ENCODE measurements at regions of chrX and their contacts with region 1.

Region 1: DNA sequence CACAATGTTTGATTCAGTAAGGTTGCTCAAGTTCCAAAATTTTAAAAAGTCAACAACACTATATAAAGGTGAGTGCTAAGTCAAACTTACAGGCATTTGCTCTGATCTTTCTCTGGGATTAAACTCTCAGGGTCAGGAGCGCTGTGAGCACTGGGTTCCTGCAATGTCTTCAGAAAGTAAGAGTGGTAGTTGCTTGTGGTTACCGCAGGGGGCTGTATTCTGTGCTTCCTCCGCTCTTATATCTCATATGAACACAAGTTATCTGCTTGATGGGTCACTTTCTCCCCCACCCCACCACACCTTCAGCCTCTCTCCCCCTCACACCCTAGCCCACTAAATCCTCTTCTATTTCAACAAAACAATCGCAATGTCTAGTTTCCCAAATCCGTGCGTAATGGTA is 116.4 kb upstream of the IGSF1 start:
- DNase-seq: no peak
- ATAC-seq: no peak
- H3K4me3 ChIP-seq: no peak overlapping the region
- H3K27ac ChIP-seq: no peak overlapping the region
- H3K4me1 ChIP-seq: no peaks in the 10 kb centered on the region
- H3K27me3 ChIP-seq: peaks cover 0 to 23% (median 0%) of the 10 kb centered on the region in 7 donors
- CTCF ChIP-seq: no peak

Region 2: GRCh38 chrX:131356725-131357124 is 48.8 kb before region 1 on chrX:
- intact Hi-C with region 1: loop called in 1 of 10 experiments (anchors 1 kb)
- DNase-seq: no peak
- ATAC-seq: no peak
- H3K4me3 ChIP-seq: no peak overlapping the region
- H3K27ac ChIP-seq: no peak overlapping the region
- H3K4me1 ChIP-seq: no peaks in the 10 kb centered on the region
- H3K27me3 ChIP-seq: peaks cover 0 to 18% (median 0%) of the 10 kb centered on the region in 7 donors
- CTCF ChIP-seq: no peak

Region 3: DNA sequence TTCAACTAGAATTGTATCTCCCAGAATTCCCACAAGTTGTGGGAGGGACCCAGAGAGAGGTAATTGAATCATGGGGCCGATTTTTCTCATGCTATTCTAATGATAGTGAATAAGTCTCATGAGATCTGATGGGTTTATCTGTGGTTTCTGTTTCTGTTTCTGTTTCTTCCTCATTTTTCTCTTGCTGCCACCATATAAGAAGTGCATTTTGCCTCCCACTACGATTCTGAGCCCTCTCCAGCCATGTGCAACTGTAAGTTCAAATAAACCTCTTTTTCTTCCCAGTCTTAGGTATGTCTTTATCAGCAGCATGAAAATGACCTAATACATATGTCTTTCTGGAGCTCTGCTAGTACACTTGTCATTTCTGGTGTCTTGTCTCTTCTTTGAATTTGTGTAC is 116.3 kb after region 1 on chrX:
- intact Hi-C with region 1: no loop called
- DNase-seq: no peak
- ATAC-seq: no peak
- H3K4me3 ChIP-seq: no peak overlapping the region
- H3K27ac ChIP-seq: no peak overlapping the region
- H3K4me1 ChIP-seq: no peaks in the 10 kb centered on the region
- H3K27me3 ChIP-seq: peaks cover 0 to 12% (median 0%) of the 10 kb centered on the region in 7 donors
- CTCF ChIP-seq: no peak

Region 4: GRCh38 chrX:131589032-131589431 is 183.5 kb after region 1 on chrX:
- intact Hi-C with region 1: no loop called
- DNase-seq: no peak
- ATAC-seq: no peak
- H3K4me3 ChIP-seq: no peak overlapping the region
- H3K27ac ChIP-seq: no peak overlapping the region
- H3K4me1 ChIP-seq: no peaks in the 10 kb centered on the region
- H3K27me3 ChIP-seq: peaks cover 0 to 53% (median 0%) of the 10 kb centered on the region in 7 donors
- CTCF ChIP-seq: no peak

Region 5: DNA sequence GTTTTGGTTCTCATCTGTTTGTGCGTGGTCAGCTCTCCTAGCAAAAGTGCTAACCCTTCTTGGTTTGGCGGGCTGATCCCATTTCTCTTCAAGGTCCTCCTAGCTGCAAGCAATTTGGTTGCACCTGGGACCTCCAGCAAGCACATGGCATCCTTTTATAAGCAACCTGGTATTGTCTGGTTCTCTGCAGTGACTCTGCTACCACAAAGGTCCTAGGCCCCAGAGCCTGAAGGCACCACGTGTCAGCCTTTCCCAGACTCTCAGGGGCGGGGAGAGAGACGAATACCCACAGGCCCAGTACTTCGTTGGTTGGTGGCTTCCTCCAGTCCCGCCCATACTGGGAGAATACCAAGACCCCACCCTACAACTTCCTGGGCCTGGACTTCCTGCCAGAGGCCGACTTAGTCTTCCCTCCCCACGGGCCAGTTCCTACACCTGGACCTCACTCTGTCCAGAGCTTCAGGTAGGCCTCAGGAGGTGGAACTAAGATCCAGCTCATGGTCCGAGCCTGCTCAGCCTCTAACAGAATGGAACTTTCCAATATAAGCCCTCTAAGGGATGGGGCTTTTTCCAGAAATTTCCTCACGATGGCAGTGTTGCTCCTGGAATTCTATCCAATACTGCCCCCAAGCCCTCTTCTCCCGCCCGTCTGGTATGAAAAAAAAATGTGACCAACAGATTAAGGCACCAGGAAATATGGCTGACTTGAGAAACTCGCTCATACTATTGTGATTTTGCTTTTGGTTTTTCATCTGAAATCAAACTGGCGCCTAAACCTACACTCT is 425.1 kb after region 1 on chrX:
- intact Hi-C with region 1: no loop called
- DNase-seq: peak; percentile 34 to 83
- ATAC-seq: peak; percentile 90 to 97 (median 96)
- H3K4me3 ChIP-seq: peak overlapping the region in 8 of 10 donors; percentile 12 to 48 (median 34)
- H3K27ac ChIP-seq: peak overlapping the region in 9 of 10 donors; percentile 47 to 86 (median 76)
- H3K4me1 ChIP-seq: peaks cover 0 to 15% (median 0%) of the 10 kb centered on the region in 9 donors
- H3K27me3 ChIP-seq: peaks cover 0 to 55% (median 0%) of the 10 kb centered on the region in 7 donors
- CTCF ChIP-seq: peak; percentile 30 to 68 (median 61)

Measured in heart right ventricle (tissue), 16 donors.